Heart left ventricle (tissue), 16 donors: ENCODE measurements at regions of chr2 and their contacts with region 1.

Region 1: GRCh38 chr2:44244129-44244871 is 31.0 kb upstream of the SLC3A1 start:
- DNase-seq: peak; percentile 47 to 65 (median 53)
- ATAC-seq: peak in 3 of 4 donors; percentile 64 to 82 (median 71)
- H3K4me3 ChIP-seq: peak overlapping the region in 10 of 12 donors; percentile 17 to 54 (median 40)
- H3K27ac ChIP-seq: no peak overlapping the region
- H3K4me1 ChIP-seq: peaks cover 0 to 12% (median 1%) of the 10 kb centered on the region in 12 donors
- H3K27me3 ChIP-seq: no peaks in the 10 kb centered on the region
- CTCF ChIP-seq: peak; percentile 56 to 77 (median 66)
- POLR2A ChIP-seq: no peak

Region 2: DNA sequence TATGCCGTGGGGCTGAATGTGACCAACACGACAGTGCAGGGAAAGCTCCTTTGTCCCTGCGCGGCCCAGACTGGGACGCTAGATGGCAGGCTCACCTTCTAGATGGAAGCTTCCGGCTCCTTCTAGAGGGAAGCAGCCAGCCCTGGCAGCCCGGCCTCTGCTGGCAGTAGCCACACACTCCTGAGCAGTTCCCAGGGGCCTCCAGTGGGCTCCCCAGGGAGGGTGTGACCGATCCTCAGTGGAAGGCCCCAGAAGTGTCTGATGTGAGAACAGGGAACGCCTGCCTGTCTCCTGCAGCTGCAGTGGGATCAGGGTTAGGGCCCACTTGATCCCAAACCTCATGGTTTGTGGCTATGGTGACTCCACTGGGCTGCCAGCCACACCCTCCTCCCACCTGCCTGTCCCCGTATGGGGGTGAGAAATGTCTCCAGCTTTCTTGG is 200.0 kb before region 1 on chr2:
- intact Hi-C with region 1: loop called in 1 of 10 experiments (anchors 5 kb)
- DNase-seq: peak; percentile 73 to 90 (median 82)
- ATAC-seq: peak; percentile 77 to 99 (median 94)
- H3K4me3 ChIP-seq: no peak overlapping the region
- H3K27ac ChIP-seq: no peak overlapping the region
- H3K4me1 ChIP-seq: peaks cover 0 to 7% (median 2%) of the 10 kb centered on the region in 12 donors
- H3K27me3 ChIP-seq: no peaks in the 10 kb centered on the region
- CTCF ChIP-seq: peak; percentile 60 to 93 (median 83)
- POLR2A ChIP-seq: no peak

Region 3: DNA sequence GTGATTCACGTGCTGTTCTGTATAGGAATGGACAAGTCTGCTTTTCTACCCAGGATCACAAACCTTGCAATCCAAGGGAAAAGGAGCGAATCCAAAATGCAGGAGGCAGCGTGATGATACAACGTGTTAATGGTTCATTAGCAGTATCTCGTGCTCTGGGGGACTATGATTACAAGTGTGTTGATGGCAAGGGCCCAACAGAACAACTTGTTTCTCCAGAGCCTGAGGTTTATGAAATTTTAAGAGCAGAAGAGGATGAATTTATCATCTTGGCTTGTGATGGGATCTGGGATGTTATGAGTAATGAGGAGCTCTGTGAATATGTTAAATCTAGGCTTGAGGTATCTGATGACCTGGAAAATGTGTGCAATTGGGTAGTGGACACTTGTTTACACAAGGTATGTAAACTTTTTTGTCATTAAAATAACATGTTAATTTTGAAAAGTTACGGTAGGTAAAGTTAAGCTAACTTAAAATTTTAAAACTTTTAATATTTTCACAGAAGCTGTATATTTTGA is 42.6 kb before region 1 on chr2:
- intact Hi-C with region 1: no loop called
- DNase-seq: no peak
- ATAC-seq: peak in 1 of 4 donors; percentile 24
- H3K4me3 ChIP-seq: no peak overlapping the region
- H3K27ac ChIP-seq: no peak overlapping the region
- H3K4me1 ChIP-seq: peaks cover 0 to 15% (median 9%) of the 10 kb centered on the region in 12 donors
- H3K27me3 ChIP-seq: no peaks in the 10 kb centered on the region
- CTCF ChIP-seq: no peak
- POLR2A ChIP-seq: no peak

Region 4: GRCh38 chr2:44233450-44234128 is 10.7 kb before region 1 on chr2:
- intact Hi-C with region 1: no loop called
- DNase-seq: no peak
- ATAC-seq: no peak
- H3K4me3 ChIP-seq: no peak overlapping the region
- H3K27ac ChIP-seq: no peak overlapping the region
- H3K4me1 ChIP-seq: peaks cover 0 to 6% (median 0%) of the 10 kb centered on the region in 12 donors
- H3K27me3 ChIP-seq: no peaks in the 10 kb centered on the region
- CTCF ChIP-seq: no peak
- POLR2A ChIP-seq: no peak

Region 5: DNA sequence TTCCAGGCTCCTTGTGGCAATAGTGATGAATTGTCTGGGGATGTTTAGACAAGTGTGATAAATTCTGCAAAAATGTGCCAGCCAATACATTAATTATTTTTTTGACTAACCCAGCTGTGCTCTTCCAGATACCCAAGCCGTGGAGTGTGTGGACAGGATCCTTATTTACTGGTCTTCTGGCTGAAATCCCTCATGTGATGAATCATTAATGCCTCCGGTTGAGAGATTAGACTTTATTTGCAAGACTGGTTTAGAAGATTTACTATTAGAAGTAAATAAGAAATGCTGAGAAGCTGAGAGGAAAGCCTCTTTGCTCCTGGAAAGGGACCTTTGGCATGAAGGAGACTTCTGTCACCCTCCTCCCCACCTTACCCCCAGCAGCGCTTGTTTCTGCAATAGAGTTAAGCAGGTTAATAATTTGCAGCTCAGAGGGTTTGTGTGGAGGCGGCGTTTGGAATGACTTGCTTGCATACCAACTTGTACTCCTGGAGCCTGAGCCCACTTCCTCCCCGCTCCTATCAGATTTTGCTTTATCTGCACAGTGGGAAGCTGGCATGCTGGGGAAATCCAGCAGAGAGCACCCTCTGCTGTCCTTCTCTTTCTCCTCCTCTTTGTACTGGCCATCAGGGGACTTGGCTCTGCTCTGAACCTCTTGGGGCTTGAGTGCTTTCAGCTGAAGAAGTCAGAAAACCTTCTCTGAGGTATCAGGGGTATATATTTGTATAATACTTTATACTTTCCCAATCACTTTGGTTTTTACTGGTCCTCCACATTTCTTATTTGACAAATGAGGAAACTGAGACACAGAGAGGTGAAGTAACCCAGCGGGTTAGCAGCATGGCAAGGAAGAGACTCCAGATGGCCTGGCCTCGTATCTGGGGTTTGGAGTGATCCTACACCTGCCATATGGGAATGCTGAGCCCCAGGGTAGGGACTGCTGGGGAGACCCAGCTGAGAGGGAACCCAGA is 47.3 kb after region 1 on chr2:
- intact Hi-C with region 1: loop called in 2 of 10 experiments (anchors 10 kb)
- DNase-seq: peak in 1 of 5 donors; percentile 7
- ATAC-seq: peak in 3 of 4 donors; percentile 61 to 68 (median 66)
- H3K4me3 ChIP-seq: no peak overlapping the region
- H3K27ac ChIP-seq: no peak overlapping the region
- H3K4me1 ChIP-seq: peaks cover 0 to 9% (median 0%) of the 10 kb centered on the region in 12 donors
- H3K27me3 ChIP-seq: no peaks in the 10 kb centered on the region
- CTCF ChIP-seq: peak; percentile 10 to 56 (median 38)
- POLR2A ChIP-seq: no peak

Region 6: GRCh38 chr2:44330801-44331200 is 86.5 kb after region 1 on chr2:
- intact Hi-C with region 1: loop called in 2 of 10 experiments (anchors 10 kb)
- DNase-seq: no peak
- ATAC-seq: no peak
- H3K4me3 ChIP-seq: no peak overlapping the region
- H3K27ac ChIP-seq: no peak overlapping the region
- H3K4me1 ChIP-seq: peaks cover 0 to 22% (median under 1%) of the 10 kb centered on the region in 12 donors
- H3K27me3 ChIP-seq: no peaks in the 10 kb centered on the region
- CTCF ChIP-seq: no peak
- POLR2A ChIP-seq: no peak

Region 7: GRCh38 chr2:44361330-44362206 is 117.3 kb after region 1 on chr2 and contains the starts of genes CAMKMT and PREPL:
- intact Hi-C with region 1: loop called in 1 of 10 experiments (anchors 10 kb)
- DNase-seq: peak; percentile 98 to 99 (median 99)
- ATAC-seq: peak; percentile 96 to 98 (median 96)
- H3K4me3 ChIP-seq: peak within 1 kb of the TSS; percentile 60 to 97 (median 89)
- H3K27ac ChIP-seq: peak within 1 kb of the TSS; percentile 89 to 99 (median 96)
- H3K4me1 ChIP-seq: peaks cover 0 to 45% (median 32%) of the 10 kb centered on the region in 12 donors
- H3K27me3 ChIP-seq: no peaks in the 10 kb centered on the region
- CTCF ChIP-seq: no peak
- POLR2A ChIP-seq: peak in 1 of 2 donors; percentile 50
- total RNA-seq, gene CAMKMT: 2.5 to 10.1 (median 4.3) TPM
- total RNA-seq, gene PREPL: 62.4 to 120 (median 73.9) TPM

Region 8: GRCh38 chr2:44372246-44372645 is 127.9 kb after region 1 on chr2:
- intact Hi-C with region 1: no loop called
- DNase-seq: no peak
- ATAC-seq: no peak
- H3K4me3 ChIP-seq: no peak overlapping the region
- H3K27ac ChIP-seq: no peak overlapping the region
- H3K4me1 ChIP-seq: no peaks in the 10 kb centered on the region
- H3K27me3 ChIP-seq: no peaks in the 10 kb centered on the region
- CTCF ChIP-seq: no peak
- POLR2A ChIP-seq: no peak